Activated naive CD4-positive, alpha-beta T cell treated with anti-CD3 and anti-CD28 coated beads for 36 hours (primary cell): ENCODE measurements at regions of chr1 and their contacts with region 1.

Region 1: DNA sequence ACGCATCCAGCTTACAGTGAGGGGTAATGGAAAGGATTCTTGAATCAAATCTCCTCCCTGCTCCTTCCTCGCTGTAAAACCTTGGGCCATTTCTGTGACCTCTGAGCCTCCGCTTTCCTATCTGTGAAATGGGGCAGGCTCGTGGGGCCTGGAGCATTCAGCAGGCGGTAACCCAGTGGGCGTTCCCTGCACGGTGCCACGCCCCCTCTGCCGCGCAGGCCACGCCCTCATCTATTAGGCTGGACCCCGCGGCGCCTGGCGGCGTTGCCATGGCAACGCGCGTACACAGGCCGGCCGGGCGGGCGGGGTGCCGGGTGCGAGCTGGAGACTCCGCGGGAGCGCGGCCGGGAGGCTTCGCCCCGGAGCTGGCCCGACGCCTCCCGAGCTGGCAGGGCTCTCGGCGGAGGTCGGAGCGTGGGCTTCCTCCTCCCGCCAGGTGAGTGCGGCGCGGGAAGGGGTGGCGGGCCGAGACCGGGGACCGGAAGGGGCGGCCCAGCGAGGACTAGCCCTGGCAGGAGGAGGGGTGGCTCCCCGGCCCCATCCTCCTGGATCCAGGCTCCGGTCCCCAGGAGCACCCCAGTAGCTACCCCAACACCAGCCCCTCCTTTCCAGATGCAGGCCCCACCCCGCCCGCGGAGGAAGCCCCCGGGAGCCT is at the start of gene FHAD1:
- DNase-seq: peak; percentile 48
- H3K4me3 Mint-ChIP-seq: peak within 1 kb of the TSS; percentile 51
- H3K27ac Mint-ChIP-seq: peak within 1 kb of the TSS; percentile 59
- H3K4me1 Mint-ChIP-seq: peaks cover 66% of the 10 kb centered on the region
- H3K27me3 Mint-ChIP-seq: peaks cover 50% of the 10 kb centered on the region
- total RNA-seq, gene FHAD1: 0.45 TPM in 1 of 2 experiments, not detected in the other

Region 2: GRCh38 chr1:15168479-15168878 is 78.6 kb before region 1 on chr1:
- CTCF ChIA-PET with region 1: no interaction called
- intact Hi-C with region 1: no loop called
- DNase-seq: no peak
- H3K4me3 Mint-ChIP-seq: no peak overlapping the region
- H3K27ac Mint-ChIP-seq: no peak overlapping the region
- H3K4me1 Mint-ChIP-seq: no peaks in the 10 kb centered on the region
- H3K27me3 Mint-ChIP-seq: peaks cover 11% of the 10 kb centered on the region

Region 3: DNA sequence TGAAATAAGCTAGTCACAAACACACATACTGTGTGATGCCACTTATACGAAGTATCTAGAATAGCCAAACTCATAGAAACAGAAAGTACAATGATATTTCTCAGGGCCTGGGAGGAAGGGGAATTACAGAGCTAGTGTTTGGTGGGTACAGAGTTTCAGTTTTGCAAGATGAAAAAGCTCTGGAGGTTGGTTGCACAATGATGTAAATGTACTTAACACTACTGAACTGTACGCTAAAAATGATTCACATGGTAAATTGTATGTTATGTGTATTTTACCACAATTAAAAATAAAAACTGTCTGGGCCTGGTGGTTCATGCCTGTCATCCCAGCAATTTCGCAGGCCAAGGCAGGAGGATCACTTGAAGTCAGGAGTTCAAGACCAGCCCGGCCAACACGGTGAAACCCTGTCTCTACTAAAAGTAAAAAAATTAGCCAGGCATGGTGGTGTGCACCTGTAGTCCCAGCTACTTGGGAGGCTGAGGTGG is 15.3 kb before region 1 on chr1:
- CTCF ChIA-PET with region 1: interaction called, 9 read pairs
- intact Hi-C with region 1: loop called (anchors 1 kb)
- DNase-seq: peak; percentile 50
- H3K4me3 Mint-ChIP-seq: no peak overlapping the region
- H3K27ac Mint-ChIP-seq: no peak overlapping the region
- H3K4me1 Mint-ChIP-seq: peaks cover 21% of the 10 kb centered on the region
- H3K27me3 Mint-ChIP-seq: peaks cover 7% of the 10 kb centered on the region